Vagina (tissue), 2 donors: ENCODE measurements at regions of chr1 and their contacts with region 1.

Region 1: DNA sequence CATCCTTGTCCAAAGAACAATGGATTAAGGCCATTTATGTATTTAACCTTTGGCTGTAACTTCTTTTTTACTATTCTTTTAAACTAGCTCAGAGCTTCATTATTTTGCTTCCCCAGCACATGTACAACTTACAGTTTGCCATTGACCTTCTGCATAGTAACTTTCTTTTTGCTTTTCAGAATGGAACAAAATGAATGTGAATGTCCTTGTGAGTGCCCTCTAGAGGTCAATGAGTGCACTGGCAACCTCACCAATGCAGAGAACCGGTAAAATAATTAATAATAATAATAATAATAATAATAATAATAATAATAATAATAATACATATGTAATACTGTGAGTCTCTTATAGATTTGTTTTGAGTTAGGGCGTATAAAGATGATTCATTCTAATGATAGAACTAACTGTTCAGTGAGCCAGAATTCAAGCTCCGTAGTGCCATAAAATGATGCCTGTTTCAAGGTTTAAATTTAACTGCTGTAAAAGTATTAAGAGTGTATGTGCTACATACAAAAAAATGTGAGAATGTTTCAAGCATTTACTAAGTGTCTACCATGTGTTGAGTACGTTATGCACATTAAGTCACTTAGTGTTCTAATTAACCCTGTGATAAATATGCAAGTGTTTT is 69.0 kb upstream of the RAVER2 start:
- DNase-seq: no peak
- H3K4me3 ChIP-seq: no peak overlapping the region
- H3K27ac ChIP-seq: no peak overlapping the region
- H3K4me1 ChIP-seq: no peaks in the 10 kb centered on the region
- H3K27me3 ChIP-seq: no peaks in the 10 kb centered on the region
- CTCF ChIP-seq: peak in 1 of 3 experiments; percentile 19
- POLR2A ChIP-seq: no peak

Region 2: DNA sequence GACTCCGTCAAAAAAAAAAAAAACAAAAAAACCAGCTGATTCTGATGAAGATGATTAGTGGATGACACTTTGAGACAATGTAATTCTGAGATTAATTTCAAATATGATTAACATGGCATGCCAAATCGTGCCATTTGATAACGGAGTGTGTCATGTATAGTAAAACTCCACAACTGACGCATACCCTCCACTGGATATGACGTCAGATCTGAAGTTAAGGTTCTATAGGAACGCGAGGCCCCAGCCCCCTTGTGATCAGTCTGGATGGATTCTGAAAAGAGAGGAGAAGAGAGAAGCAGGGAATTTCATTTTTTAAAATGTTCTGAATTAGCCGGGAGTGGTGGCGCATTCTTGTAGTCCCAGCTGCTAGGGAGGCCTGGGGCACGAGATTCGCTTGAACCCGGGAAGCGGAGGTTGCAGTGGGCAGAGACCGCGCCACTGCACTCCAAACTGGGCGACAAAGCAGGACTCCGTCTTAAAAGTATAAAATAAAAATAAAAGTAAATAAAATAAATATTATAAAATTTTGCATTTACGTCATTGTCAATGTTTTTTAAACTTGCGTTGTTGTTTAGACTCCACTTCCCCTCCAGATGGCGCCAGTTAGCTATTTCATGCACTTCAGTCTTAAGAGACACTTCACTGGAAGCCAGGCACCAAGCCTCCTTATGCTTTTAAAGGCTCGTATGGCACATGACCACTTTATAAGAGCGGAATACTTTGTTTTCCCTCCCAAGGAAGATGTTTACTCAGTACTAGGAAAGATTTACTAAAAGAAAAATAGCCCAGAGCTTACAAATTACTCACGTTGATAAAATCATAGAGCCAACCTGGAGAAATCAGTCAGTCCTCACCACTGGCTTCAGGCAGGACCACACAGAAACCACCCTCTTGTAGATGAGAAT is 406.9 kb before region 1 on chr1:
- intact Hi-C with region 1: loop called (anchors 10 kb)
- DNase-seq: no peak
- H3K4me3 ChIP-seq: no peak overlapping the region
- H3K27ac ChIP-seq: peak overlapping the region; percentile 48
- H3K4me1 ChIP-seq: peaks cover 13% of the 10 kb centered on the region
- H3K27me3 ChIP-seq: no peaks in the 10 kb centered on the region
- CTCF ChIP-seq: peak; percentile 36 to 90 (median 85)
- POLR2A ChIP-seq: no peak

Region 3: GRCh38 chr1:64469977-64470664 is 205.7 kb before region 1 on chr1 and contains the start of gene CACHD1:
- intact Hi-C with region 1: loop called (anchors 5 kb)
- DNase-seq: no peak
- H3K4me3 ChIP-seq: peak within 1 kb of the TSS; percentile 57 to 81
- H3K27ac ChIP-seq: peak within 1 kb of the TSS; percentile 93
- H3K4me1 ChIP-seq: peaks cover 33% of the 10 kb centered on the region
- H3K27me3 ChIP-seq: no peaks in the 10 kb centered on the region
- CTCF ChIP-seq: peak in 2 of 3 experiments; percentile 5 to 60
- POLR2A ChIP-seq: no peak
- total RNA-seq, gene CACHD1: 27.7 TPM